ENCODE measurements at regions of chr7 and their contacts with region 1.

Region 1: GRCh38 chr7:26055241-26055640 is 96.8 kb upstream of the NFE2L3 start:
- DNase-seq: no peak
- ATAC-seq: no peak
- H3K4me3 ChIP-seq: no peak overlapping the region
- H3K27ac ChIP-seq: no peak overlapping the region
- H3K4me1 ChIP-seq: peaks cover 16% of the 10 kb centered on the region
- H3K27me3 ChIP-seq: no peaks in the 10 kb centered on the region
- CTCF ChIP-seq: no peak
- POLR2A ChIP-seq: no peak

Region 2: DNA sequence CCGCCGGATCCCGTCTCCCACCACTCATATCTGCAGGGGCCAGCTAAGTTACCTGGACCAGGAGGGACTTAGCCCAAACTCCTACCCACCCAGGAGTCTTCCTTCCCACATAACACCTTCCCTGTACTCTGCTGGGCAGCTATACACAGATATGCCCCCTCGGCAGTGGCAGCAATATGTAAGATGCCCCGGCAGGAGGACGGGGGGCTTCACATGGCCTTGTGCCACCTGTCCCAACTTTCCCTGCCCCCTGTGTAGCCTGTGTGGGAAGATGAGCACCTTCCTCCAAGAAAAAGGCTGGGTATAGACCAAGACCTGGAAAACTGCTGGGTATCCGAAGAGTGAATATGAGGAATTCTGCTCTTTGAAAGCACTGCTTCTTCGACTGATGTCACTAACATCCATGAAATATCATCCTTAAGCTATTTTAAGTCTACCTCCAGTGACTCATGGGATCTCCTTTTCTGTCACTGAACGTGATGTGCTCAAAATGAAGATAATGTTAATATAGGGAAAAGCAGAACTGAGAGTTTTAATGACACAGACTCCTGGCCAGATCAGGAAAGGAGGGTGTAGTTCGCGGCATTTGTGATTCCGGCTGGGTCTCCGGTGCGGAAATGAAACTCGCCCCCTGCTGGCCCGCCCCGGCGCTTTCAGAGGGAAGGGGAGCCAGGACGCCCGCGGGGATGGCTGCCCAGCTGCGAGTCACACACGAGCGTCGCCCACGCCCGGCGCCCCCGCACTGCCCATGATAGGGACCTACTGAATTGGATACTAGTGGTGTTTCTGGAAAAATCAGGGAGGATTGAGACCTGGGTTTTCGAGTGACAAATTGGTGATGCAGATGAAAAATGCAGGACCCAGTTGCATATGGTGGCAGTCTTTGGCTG is 160.1 kb before region 1 on chr7:
- intact Hi-C with region 1: loop called (anchors 5 kb)
- DNase-seq: peak; percentile 72 to 83 (median 78)
- ATAC-seq: peak; percentile 76
- H3K4me3 ChIP-seq: no peak overlapping the region
- H3K27ac ChIP-seq: peak overlapping the region; percentile 29 to 60 (median 40)
- H3K4me1 ChIP-seq: peaks cover 42% of the 10 kb centered on the region
- H3K27me3 ChIP-seq: no peaks in the 10 kb centered on the region
- CTCF ChIP-seq: peak; percentile 57 to 78 (median 71)
- POLR2A ChIP-seq: peak in 2 of 3 donors; percentile 26 to 52